ENCODE measurements at regions of chr5 and their contacts with region 1.

Region 1: DNA sequence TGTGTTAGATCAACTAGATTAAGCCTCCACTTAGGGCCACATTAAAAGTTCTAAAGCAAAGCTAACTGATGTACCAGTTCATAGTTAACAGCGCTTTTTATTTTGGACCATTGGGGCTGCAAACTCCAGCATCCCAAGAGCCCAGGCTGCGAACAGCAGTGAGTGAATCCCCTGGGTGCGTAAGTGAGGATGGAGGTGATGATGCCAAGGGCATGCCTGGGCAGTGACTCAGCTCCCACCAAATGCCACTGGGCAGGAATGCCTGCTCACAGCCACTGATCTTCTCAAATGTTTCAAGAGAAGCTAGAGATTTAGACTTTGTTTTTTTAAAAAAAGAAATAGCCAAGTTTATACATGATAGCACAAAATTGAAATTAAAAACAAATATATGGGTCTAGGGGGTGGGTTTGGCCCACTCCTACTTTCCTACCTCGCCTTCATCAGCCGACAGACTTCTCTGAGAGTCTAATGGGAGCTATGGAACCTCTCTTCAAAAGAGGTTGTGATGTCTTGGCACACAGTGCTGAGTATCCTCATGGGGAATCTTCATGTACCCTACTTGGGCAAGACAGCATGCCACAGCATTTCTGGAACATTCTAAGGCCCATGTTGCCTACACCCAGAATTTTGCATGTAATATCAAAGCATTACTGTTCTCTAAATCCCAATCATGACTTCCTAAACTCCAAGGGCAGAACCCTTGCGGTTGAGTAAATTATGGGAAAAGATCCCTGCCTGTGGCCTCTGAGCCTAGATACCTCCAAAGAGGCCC is 398.1 kb downstream of the EBF1 start:
- DNase-seq: no peak
- ATAC-seq: no peak
- H3K4me3 ChIP-seq: no peak overlapping the region
- H3K27ac ChIP-seq: no peak overlapping the region
- H3K4me1 ChIP-seq: no peaks in the 10 kb centered on the region
- H3K27me3 ChIP-seq: peaks cover 6% of the 10 kb centered on the region; the same call in 1 of the 2 replicates
- CTCF ChIP-seq: no peak

Region 2: GRCh38 chr5:158431369-158432029 is 270.1 kb before region 1 on chr5:
- CTCF ChIA-PET with region 1: no interaction called
- POLR2A ChIA-PET with region 1: no interaction called
- in situ Hi-C with region 1: no loop called
- intact Hi-C with region 1: no loop called
- DNase-seq: no peak
- ATAC-seq: no peak
- H3K4me3 ChIP-seq: no peak overlapping the region
- H3K27ac ChIP-seq: no peak overlapping the region
- H3K4me1 ChIP-seq: no peaks in the 10 kb centered on the region
- H3K27me3 ChIP-seq: no peaks in the 10 kb centered on the region
- CTCF ChIP-seq: no peak

Region 3: GRCh38 chr5:159605585-159605984 is 904.0 kb after region 1 on chr5:
- CTCF ChIA-PET with region 1: no interaction called
- POLR2A ChIA-PET with region 1: no interaction called
- in situ Hi-C with region 1: no loop called
- intact Hi-C with region 1: loop called (anchors 5 kb)
- DNase-seq: no peak
- ATAC-seq: no peak
- H3K4me3 ChIP-seq: no peak overlapping the region
- H3K27ac ChIP-seq: no peak overlapping the region
- H3K4me1 ChIP-seq: no peaks in the 10 kb centered on the region
- H3K27me3 ChIP-seq: no peaks in the 10 kb centered on the region
- CTCF ChIP-seq: no peak

Measured in Panc1 (cell line).